Endothelial cell of umbilical vein (primary cell): ENCODE measurements at regions of chrX and their contacts with region 1.

Region 1: DNA sequence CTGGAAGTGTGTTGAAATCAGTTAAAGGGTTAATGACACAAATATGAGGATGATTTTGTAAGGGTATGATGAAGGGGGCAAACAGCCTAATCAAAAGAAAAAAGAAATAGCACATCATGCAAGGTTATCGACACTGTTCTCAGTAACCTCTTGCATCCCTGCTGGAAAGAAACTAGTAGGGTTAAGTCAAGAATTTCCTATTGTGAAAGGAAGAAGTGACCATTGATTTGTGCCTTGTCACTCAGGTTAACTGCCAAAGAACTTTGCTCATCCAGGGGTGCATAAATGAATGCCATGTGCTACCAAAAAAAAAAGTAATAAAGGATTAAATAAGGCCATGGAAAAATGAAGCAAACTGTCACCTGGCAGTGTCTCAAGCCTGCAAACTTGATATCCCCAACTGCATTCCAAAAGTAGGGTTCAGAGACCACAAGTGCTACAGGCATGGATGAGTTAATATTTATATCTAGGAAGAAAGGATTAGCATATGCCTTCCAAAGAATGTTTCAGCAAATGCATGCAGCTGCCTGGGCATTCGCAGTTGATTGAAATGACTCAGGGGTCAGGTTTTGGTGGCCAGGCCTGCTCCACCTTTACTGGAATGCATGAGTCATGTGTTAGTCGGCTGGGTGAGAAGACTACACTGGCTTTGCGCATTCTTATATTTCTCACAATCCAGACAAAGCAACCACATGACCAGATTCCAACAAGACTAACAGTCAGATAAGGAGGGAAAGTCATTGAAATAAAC is 78.4 kb upstream of the ATXN3L start:
- DNase-seq: peak; percentile 95
- H3K4me3 ChIP-seq: no peak overlapping the region
- H3K27ac ChIP-seq: peak overlapping the region; percentile 93
- H3K4me1 ChIP-seq: peaks cover 31% of the 10 kb centered on the region
- H3K27me3 ChIP-seq: no peaks in the 10 kb centered on the region
- CTCF ChIP-seq: no peak
- POLR2A ChIP-seq: peak; percentile 37

Region 2: GRCh38 chrX:13123857-13124345 is 274.3 kb before region 1 on chrX:
- CTCF ChIA-PET with region 1: no interaction called
- POLR2A ChIA-PET with region 1: no interaction called
- dilution Hi-C with region 1: no loop called
- intact Hi-C with region 1: loop called (anchors 2 kb)
- DNase-seq: peak; percentile 93
- H3K4me3 ChIP-seq: no peak overlapping the region
- H3K27ac ChIP-seq: peak overlapping the region; percentile 91
- H3K4me1 ChIP-seq: peaks cover 59% of the 10 kb centered on the region
- H3K27me3 ChIP-seq: no peaks in the 10 kb centered on the region
- CTCF ChIP-seq: no peak
- POLR2A ChIP-seq: peak; percentile 45

Region 3: DNA sequence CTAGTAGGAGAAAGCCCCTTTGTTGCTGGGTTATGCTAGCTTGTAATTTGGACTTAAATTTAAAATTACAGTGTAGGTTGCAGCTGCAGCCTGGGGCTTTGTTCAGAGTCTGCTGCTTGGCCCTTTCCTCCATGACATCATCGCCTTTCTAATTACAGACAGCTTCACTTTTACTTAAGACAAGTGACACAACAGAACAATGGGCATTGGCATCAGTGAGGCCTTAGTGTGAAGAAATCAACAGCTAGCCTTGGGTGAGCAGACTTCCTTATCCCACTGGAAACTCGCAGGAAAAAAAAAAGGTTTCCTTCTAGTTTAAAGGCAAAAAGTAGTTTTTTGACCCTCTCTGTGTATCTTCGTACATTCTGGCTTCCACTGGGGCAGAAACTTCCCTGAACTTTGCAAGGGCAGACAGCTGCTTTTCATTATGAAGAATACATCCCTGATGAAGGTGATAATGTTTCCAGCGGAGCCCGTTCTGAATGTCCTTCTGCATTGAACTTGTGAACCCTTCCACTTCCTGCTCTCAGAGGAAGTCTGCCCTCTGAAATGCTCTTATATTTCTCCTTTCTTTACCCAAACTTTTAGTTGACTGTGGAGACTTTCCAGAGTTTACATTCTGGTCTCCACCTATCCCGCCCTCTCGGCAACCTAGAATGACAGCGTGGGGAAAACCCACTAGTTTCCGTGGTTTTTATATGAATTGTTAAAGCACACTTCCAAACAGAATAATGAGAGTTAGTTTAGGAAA is 230.6 kb before region 1 on chrX:
- CTCF ChIA-PET with region 1: no interaction called
- POLR2A ChIA-PET with region 1: no interaction called
- dilution Hi-C with region 1: no loop called
- intact Hi-C with region 1: loop called (anchors 5 kb)
- DNase-seq: peak; percentile 79
- H3K4me3 ChIP-seq: no peak overlapping the region
- H3K27ac ChIP-seq: peak overlapping the region; percentile 93
- H3K4me1 ChIP-seq: peaks cover 38% of the 10 kb centered on the region
- H3K27me3 ChIP-seq: no peaks in the 10 kb centered on the region
- CTCF ChIP-seq: no peak
- POLR2A ChIP-seq: no peak

Region 4: DNA sequence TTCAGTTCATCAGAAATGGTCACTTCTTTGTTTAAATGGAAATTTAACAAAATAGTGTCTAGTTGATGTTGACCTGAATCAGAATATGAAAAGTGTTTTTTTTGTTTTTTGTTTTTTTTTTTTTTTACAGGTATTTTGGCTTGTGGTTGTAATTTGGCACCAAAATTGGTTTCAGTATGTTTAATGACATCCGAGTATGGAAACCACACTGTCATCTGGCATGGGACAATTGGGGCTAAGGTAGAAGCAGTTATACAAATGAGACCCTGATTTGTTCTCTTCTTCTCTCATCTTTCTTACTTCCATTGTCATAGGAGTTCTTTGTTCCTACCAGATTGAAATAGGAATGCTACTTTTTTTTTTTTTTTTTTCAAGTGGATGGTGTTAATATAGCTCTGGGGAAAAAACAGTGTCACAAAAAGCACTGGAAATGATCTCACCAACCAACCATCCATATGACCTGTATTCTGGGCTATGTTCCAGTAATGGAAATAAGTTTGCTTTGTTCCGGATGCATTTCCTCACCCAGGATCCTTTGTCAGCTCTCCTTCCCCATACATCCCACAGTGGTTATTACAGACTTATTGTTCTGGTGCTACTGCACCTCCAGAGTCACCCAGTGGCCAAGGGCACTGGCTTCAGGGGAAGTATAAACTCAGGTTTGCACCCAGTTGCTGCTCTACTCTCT is 174.2 kb before region 1 on chrX:
- CTCF ChIA-PET with region 1: interaction called, 3 read pairs
- POLR2A ChIA-PET with region 1: no interaction called
- dilution Hi-C with region 1: no loop called
- intact Hi-C with region 1: loop called (anchors 1 kb)
- DNase-seq: peak; percentile 91
- H3K4me3 ChIP-seq: no peak overlapping the region
- H3K27ac ChIP-seq: peak overlapping the region; percentile 87
- H3K4me1 ChIP-seq: peaks cover 16% of the 10 kb centered on the region
- H3K27me3 ChIP-seq: no peaks in the 10 kb centered on the region
- CTCF ChIP-seq: peak in 1 of 2 donors; percentile 14
- POLR2A ChIP-seq: no peak

Region 5: DNA sequence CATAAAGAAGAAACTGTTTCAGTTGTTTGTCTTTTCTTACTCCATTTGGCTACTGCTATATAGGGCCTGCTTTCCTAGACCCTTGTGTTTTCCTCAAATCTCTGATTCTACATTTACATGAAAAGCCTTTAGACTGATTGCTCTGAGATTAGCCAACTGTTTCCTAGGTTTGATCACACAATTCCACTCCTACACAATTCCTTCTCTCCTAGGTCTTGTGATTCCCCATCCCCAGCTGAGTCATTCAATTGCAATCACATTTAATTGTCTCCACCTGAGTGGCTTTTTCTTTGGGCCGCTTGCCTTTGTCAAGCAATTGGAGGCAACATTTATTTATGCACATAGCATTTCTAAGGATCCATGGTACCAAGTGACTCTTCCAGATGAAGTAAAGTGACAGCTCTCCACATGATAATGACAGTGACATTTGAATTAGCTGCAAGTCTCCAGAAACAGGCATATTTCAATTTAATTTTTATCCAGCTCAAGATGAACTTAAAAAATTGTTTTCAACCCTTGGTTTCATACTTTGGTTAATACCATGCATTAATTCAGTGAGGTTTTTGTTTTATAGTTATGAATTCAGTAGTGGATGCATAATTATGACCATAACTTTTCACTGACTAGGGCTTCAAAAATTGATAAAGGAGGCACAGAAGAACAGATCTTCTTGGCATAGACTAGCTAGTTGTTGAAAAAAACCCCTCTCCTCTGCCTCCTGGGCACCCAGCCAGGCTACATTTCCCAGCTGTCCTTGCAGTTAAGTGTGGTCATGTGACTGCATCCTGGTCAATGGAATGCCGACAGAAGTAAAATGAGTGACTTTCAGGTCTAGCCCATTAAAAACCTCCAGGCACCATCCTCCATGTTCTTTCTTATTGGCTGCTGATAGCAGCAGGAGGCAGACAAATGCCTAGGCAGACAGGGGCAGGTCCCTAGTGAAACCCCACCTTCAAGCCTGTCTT is 114.0 kb before region 1 on chrX:
- CTCF ChIA-PET with region 1: no interaction called
- POLR2A ChIA-PET with region 1: no interaction called
- dilution Hi-C with region 1: no loop called
- intact Hi-C with region 1: loop called (anchors 1 kb)
- DNase-seq: peak; percentile 71
- H3K4me3 ChIP-seq: no peak overlapping the region
- H3K27ac ChIP-seq: peak overlapping the region; percentile 62
- H3K4me1 ChIP-seq: peaks cover 49% of the 10 kb centered on the region
- H3K27me3 ChIP-seq: no peaks in the 10 kb centered on the region
- CTCF ChIP-seq: no peak
- POLR2A ChIP-seq: no peak

Region 6: GRCh38 chrX:13428055-13428786 is 30.0 kb after region 1 on chrX:
- CTCF ChIA-PET with region 1: no interaction called
- POLR2A ChIA-PET with region 1: no interaction called
- dilution Hi-C with region 1: no loop called
- intact Hi-C with region 1: loop called (anchors 2 kb)
- DNase-seq: peak; percentile 76
- H3K4me3 ChIP-seq: no peak overlapping the region
- H3K27ac ChIP-seq: peak overlapping the region; percentile 68
- H3K4me1 ChIP-seq: peaks cover 30% of the 10 kb centered on the region
- H3K27me3 ChIP-seq: no peaks in the 10 kb centered on the region
- CTCF ChIP-seq: no peak
- POLR2A ChIP-seq: no peak